BJ (cell line): ENCODE measurements at regions of chr1 and their contacts with region 1.

Region 1: DNA sequence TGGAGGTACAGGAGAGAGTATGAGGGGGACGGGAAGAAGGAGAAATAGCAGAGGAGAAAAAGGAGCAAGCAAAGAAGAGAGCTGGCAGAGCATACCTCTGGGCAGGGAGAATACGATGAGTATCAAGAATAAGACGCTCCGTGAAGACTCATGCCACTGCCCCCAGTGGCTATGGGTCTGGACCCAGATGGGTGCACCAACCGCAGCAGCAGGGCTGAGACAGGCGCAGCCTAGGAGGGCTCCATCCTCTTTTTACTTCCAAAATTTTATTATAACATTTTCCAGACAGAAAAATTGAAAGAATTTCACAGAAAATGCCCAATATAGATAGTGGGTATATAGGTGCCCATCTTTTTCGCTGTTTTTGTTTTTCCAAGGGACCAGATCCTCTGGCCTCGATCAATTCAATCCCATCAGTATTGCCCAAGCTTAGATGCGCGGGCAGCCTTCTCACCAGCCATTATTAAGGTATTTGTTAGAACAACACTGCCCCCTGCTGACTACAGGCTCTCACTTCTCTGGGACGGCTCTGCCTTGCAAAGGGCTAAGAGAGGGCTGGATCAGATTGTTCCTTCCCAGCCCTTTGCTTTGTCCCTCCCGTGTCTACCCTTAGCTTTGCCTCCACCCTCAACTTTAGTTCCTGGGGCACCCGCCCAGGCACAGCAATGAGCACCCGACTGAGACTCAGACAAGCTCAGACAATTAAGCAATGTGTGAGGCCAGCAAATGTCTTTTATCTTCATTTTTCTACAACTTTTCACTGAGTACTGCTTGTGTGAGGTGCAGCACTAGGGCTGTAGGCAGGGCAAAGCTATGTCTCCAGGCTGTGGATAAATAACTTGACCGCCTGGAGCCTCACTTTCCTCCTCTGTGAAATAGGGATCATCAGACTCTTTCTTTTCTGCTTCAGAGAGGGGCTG is 17.5 kb upstream of the CAMK1G start:
- DNase-seq: no peak
- H3K4me3 ChIP-seq: no peak overlapping the region
- H3K27me3 ChIP-seq: peaks cover 6% of the 10 kb centered on the region
- CTCF ChIP-seq: peak; percentile 77

Region 2: GRCh38 chr1:209150114-209150513 is 415.9 kb before region 1 on chr1:
- CTCF ChIA-PET with region 1: no interaction called
- POLR2A ChIA-PET with region 1: no interaction called
- DNase-seq: no peak
- H3K4me3 ChIP-seq: no peak overlapping the region
- H3K27me3 ChIP-seq: no peaks in the 10 kb centered on the region
- CTCF ChIP-seq: no peak

Region 3: GRCh38 chr1:209207701-209208286 is 358.2 kb before region 1 on chr1:
- CTCF ChIA-PET with region 1: interaction called, 18 read pairs
- POLR2A ChIA-PET with region 1: no interaction called
- DNase-seq: no peak
- H3K4me3 ChIP-seq: 0 out of 2 replicates have a peak overlapping the region, but pooled peaks have one; percentile 14
- H3K27me3 ChIP-seq: peaks cover 22% of the 10 kb centered on the region
- CTCF ChIP-seq: peak; percentile 92

Region 4: GRCh38 chr1:209554761-209555611 is 11.0 kb before region 1 on chr1:
- CTCF ChIA-PET with region 1: interaction called, 11 read pairs
- POLR2A ChIA-PET with region 1: no interaction called
- DNase-seq: no peak
- H3K4me3 ChIP-seq: no peak overlapping the region
- H3K27me3 ChIP-seq: no peaks in the 10 kb centered on the region
- CTCF ChIP-seq: no peak

Region 5: DNA sequence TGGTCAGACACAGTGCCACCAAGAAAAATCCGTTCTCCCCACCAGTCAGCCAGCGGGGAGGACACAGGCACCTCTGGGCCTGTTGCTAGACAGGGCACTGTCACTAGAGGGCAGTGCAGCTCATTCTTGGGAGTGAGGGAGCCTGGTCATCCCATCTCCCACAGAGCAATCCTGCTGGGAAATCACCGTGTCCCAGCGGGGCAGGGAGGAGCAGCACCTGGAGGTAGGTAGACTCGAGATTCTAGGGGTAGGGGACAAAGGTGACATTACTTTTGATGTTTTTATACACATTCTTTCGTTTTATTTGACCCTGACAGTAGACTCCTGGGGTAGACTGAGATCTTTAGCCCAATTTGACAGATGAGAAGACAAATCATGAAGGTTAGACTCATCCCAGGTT is 10.8 kb after region 1 on chr1:
- CTCF ChIA-PET with region 1: interaction called, 33 read pairs
- POLR2A ChIA-PET with region 1: no interaction called
- DNase-seq: no peak
- H3K4me3 ChIP-seq: no peak overlapping the region
- H3K27me3 ChIP-seq: peaks cover 2% of the 10 kb centered on the region; the same call in 1 of the 2 replicates
- CTCF ChIP-seq: peak; percentile 97

Region 6: DNA sequence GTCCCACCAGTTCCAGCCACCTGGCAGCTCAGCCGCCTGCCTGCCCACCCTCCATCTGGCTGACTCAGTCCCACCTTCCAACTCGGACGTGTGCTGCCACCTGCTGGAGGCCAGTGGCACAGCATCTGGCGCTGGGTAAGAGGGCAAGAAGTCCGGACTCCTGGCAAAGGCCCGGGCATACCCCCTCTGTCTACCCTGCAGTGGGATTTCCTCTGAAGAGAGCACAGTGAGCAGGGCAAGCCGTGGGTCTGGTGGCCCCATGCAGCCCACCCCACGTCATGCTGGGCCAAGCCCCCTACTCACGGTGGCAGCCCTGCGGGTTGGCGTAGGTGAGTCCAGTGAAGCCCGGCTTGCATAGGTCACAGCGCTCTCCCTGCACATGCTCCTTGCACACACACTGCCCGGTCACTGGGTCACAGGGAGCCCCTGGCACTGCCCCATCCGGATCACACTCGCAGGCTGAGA is 61.7 kb after region 1 on chr1:
- CTCF ChIA-PET with region 1: interaction called, 45 read pairs
- POLR2A ChIA-PET with region 1: no interaction called
- DNase-seq: no peak
- H3K4me3 ChIP-seq: no peak overlapping the region
- H3K27me3 ChIP-seq: no peaks in the 10 kb centered on the region
- CTCF ChIP-seq: peak; percentile 99

Region 7: GRCh38 chr1:209692745-209693504 is 126.9 kb after region 1 on chr1:
- CTCF ChIA-PET with region 1: interaction called, 22 read pairs
- POLR2A ChIA-PET with region 1: no interaction called
- DNase-seq: peak; percentile 5
- H3K4me3 ChIP-seq: no peak overlapping the region
- H3K27me3 ChIP-seq: peaks cover 2% of the 10 kb centered on the region; the same call in 1 of the 2 replicates
- CTCF ChIP-seq: peak; percentile 80

Region 8: DNA sequence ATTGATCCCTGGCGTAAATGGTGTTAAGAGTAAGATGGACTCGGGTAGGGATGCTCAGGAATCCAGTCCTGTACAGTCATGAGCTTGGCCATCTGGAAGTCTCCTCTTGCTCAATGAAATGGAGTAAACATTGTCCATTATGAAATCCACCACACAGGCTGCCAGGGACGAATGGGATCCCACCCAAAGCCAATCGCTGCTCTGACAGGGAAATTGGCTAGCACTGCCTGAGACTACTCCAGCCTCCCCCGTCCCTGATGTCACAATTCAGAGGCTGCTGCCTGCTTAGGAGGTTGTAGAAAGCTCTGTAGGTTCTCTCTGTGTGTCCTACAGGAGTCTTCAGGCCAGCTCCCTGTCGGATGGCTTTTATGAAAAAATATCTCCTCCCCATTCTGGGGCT is 138.6 kb after region 1 on chr1 and contains the start of gene HSD11B1:
- CTCF ChIA-PET with region 1: interaction called, 11 read pairs
- POLR2A ChIA-PET with region 1: no interaction called
- DNase-seq: peak; percentile 19
- H3K4me3 ChIP-seq: no peak within 1 kb of the TSS
- H3K27me3 ChIP-seq: peaks cover 6% of the 10 kb centered on the region; the same call in 1 of the 2 replicates
- CTCF ChIP-seq: no peak
- polyA plus RNA-seq, gene HSD11B1: 0.15 and 0.16 TPM in 2 replicates